Keratinocyte (primary cell): ENCODE measurements at regions of chr4 and their contacts with region 1.

Region 1: GRCh38 chr4:78864405-78865024 is 74.7 kb downstream of the PAQR3 start:
- DNase-seq: peak; percentile 33
- H3K4me3 ChIP-seq: no peak overlapping the region
- H3K27ac ChIP-seq: no peak overlapping the region
- H3K4me1 ChIP-seq: no peaks in the 10 kb centered on the region
- H3K27me3 ChIP-seq: no peaks in the 10 kb centered on the region
- CTCF ChIP-seq: peak in 2 of 3 experiments; percentile 50 to 52

Region 2: GRCh38 chr4:78612398-78613178 is 251.9 kb before region 1 on chr4:
- dilution Hi-C with region 1: loop called (anchors 25 kb)
- DNase-seq: no peak
- H3K4me3 ChIP-seq: no peak overlapping the region
- H3K27ac ChIP-seq: no peak overlapping the region
- H3K4me1 ChIP-seq: no peaks in the 10 kb centered on the region
- H3K27me3 ChIP-seq: no peaks in the 10 kb centered on the region
- CTCF ChIP-seq: peak; percentile 18 to 51 (median 41)